CD8-positive, alpha-beta T cell (primary cell): ENCODE measurements at regions of chr11 and their contacts with region 1.

Region 1: GRCh38 chr11:1515082-1516060 is 28.8 kb upstream of the MOB2 start:
- DNase-seq: peak; percentile 56 to 84 (median 74)
- ATAC-seq: peak; percentile 67
- H3K4me3 ChIP-seq: no peak overlapping the region
- H3K4me3 Mint-ChIP-seq: peak overlapping the region; percentile 26
- H3K27ac ChIP-seq: no peak overlapping the region
- H3K27ac Mint-ChIP-seq: peak overlapping the region; percentile 18
- H3K4me1 ChIP-seq: peaks cover 51% of the 10 kb centered on the region
- H3K4me1 Mint-ChIP-seq: peaks cover 70% of the 10 kb centered on the region
- H3K27me3 ChIP-seq: no peaks in the 10 kb centered on the region
- H3K27me3 Mint-ChIP-seq: no peaks in the 10 kb centered on the region
- CTCF ChIP-seq: peak; percentile 95

Region 2: GRCh38 chr11:995752-996420 is 519.5 kb before region 1 on chr11:
- CTCF ChIA-PET with region 1: no interaction called
- POLR2A ChIA-PET with region 1: no interaction called
- intact Hi-C with region 1: no loop called
- DNase-seq: no peak
- ATAC-seq: no peak
- H3K4me3 ChIP-seq: no peak overlapping the region
- H3K4me3 Mint-ChIP-seq: no peak overlapping the region
- H3K27ac ChIP-seq: no peak overlapping the region
- H3K27ac Mint-ChIP-seq: peak overlapping the region; percentile 77
- H3K4me1 ChIP-seq: no peaks in the 10 kb centered on the region
- H3K4me1 Mint-ChIP-seq: peaks cover 13% of the 10 kb centered on the region
- H3K27me3 ChIP-seq: no peaks in the 10 kb centered on the region
- H3K27me3 Mint-ChIP-seq: no peaks in the 10 kb centered on the region
- CTCF ChIP-seq: no peak

Region 3: GRCh38 chr11:1049431-1049891 is 465.9 kb before region 1 on chr11:
- CTCF ChIA-PET with region 1: no interaction called
- POLR2A ChIA-PET with region 1: no interaction called
- intact Hi-C with region 1: no loop called
- DNase-seq: peak in 1 of 9 experiments; percentile 7
- ATAC-seq: no peak
- H3K4me3 ChIP-seq: no peak overlapping the region
- H3K4me3 Mint-ChIP-seq: no peak overlapping the region
- H3K27ac ChIP-seq: no peak overlapping the region
- H3K27ac Mint-ChIP-seq: no peak overlapping the region
- H3K4me1 ChIP-seq: peaks cover 5% of the 10 kb centered on the region
- H3K4me1 Mint-ChIP-seq: no peaks in the 10 kb centered on the region
- H3K27me3 ChIP-seq: peaks cover 0 to 11% of the 10 kb centered on the region in 2 experiments
- H3K27me3 Mint-ChIP-seq: peaks cover 16% of the 10 kb centered on the region
- CTCF ChIP-seq: no peak

Region 4: GRCh38 chr11:1202776-1203504 is 312.4 kb before region 1 on chr11:
- CTCF ChIA-PET with region 1: interaction called, 26 read pairs
- POLR2A ChIA-PET with region 1: no interaction called
- intact Hi-C with region 1: loop called in 1 of 2 experiments (anchors 1 kb)
- DNase-seq: peak; percentile 34 to 78 (median 60)
- ATAC-seq: peak; percentile 87
- H3K4me3 ChIP-seq: no peak overlapping the region
- H3K4me3 Mint-ChIP-seq: no peak overlapping the region
- H3K27ac ChIP-seq: no peak overlapping the region
- H3K27ac Mint-ChIP-seq: no peak overlapping the region
- H3K4me1 ChIP-seq: no peaks in the 10 kb centered on the region
- H3K4me1 Mint-ChIP-seq: no peaks in the 10 kb centered on the region
- H3K27me3 ChIP-seq: peaks cover 0 to 2% of the 10 kb centered on the region in 2 experiments
- H3K27me3 Mint-ChIP-seq: peaks cover 2% of the 10 kb centered on the region
- CTCF ChIP-seq: peak; percentile 88

Region 5: GRCh38 chr11:1293631-1294030 is 221.7 kb before region 1 on chr11:
- CTCF ChIA-PET with region 1: interaction called, 4 read pairs
- POLR2A ChIA-PET with region 1: no interaction called
- intact Hi-C with region 1: loop called in 1 of 2 experiments (anchors 1 kb)
- DNase-seq: peak in 2 of 9 experiments; percentile 30 to 34
- ATAC-seq: peak; percentile 46
- H3K4me3 ChIP-seq: no peak overlapping the region
- H3K4me3 Mint-ChIP-seq: no peak overlapping the region
- H3K27ac ChIP-seq: no peak overlapping the region
- H3K27ac Mint-ChIP-seq: no peak overlapping the region
- H3K4me1 ChIP-seq: no peaks in the 10 kb centered on the region
- H3K4me1 Mint-ChIP-seq: no peaks in the 10 kb centered on the region
- H3K27me3 ChIP-seq: no peaks in the 10 kb centered on the region
- H3K27me3 Mint-ChIP-seq: no peaks in the 10 kb centered on the region
- CTCF ChIP-seq: no peak